CD14-positive monocyte (primary cell): ENCODE measurements at regions of chr1 and their contacts with region 1.

Region 1: DNA sequence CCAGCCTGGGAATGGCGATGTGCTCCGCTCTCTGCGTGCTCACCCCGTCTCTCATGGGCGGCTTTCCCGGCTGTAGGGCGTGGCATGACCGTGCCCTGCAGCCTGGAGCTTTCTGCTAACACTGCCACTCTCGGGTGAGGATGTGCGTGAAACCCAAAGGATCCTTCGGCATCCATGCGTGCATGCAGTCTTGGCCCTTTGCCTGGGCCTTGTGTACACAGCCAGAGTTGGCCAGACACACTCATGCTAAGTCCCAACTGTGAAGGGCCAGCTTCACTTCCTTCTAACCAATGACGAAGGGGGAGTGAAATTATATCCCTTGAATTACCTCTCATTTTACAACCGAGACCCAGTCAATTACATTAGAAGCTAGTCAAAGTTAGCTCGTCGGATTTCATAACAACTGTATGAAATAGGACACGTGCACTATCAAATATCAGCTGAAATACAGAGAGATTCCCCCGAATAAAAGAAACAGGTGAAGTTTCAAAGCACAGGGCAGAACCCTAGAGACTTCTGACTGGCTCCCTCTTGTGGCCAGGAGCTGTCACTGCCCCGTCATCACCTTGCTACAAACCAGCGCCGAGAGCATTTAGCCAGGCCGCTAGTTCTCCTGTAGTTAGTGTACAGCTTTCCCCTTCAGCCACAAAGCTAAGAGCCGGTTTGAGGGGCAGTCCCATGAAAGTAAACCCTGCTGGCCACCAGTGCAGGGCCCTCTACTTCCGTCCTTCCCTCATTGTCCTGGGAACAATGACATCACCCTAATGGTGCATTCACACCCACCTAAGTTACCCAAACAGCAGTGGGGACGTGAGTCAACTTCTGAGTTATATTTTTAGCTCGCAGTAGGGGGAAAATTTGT is 63.4 kb upstream of the COA6 start:
- DNase-seq: peak in 2 of 3 donors; percentile 56 to 61
- H3K4me3 ChIP-seq: peak overlapping the region in 1 of 3 experiments; percentile 46
- H3K4me3 Mint-ChIP-seq: peak overlapping the region; percentile 20 to 71
- H3K27ac ChIP-seq: no peak overlapping the region
- H3K27ac Mint-ChIP-seq: peak overlapping the region in 1 of 7 donors; percentile 46
- H3K4me1 ChIP-seq: peaks cover 9 to 18% of the 10 kb centered on the region in 2 donors
- H3K4me1 Mint-ChIP-seq: peaks cover 11% of the 10 kb centered on the region
- H3K27me3 ChIP-seq: no peaks in the 10 kb centered on the region
- H3K27me3 Mint-ChIP-seq: peaks cover 0 to 4% (median 0%) of the 10 kb centered on the region in 3 donors
- CTCF ChIP-seq: peak; percentile 97

Region 2: GRCh38 chr1:234114648-234115307 is 195.1 kb before region 1 on chr1:
- intact Hi-C with region 1: loop called in 1 of 2 experiments (anchors 10 kb)
- DNase-seq: peak; percentile 22 to 56 (median 53)
- H3K4me3 ChIP-seq: no peak overlapping the region
- H3K4me3 Mint-ChIP-seq: peak overlapping the region; percentile 44 to 73
- H3K27ac ChIP-seq: no peak overlapping the region
- H3K27ac Mint-ChIP-seq: no peak overlapping the region
- H3K4me1 ChIP-seq: no peaks in the 10 kb centered on the region
- H3K4me1 Mint-ChIP-seq: peaks cover 6% of the 10 kb centered on the region
- H3K27me3 ChIP-seq: peaks cover 0 to 2% of the 10 kb centered on the region in 2 donors
- H3K27me3 Mint-ChIP-seq: peaks cover 2 to 24% (median 7%) of the 10 kb centered on the region in 3 donors
- CTCF ChIP-seq: peak; percentile 82

Region 3: DNA sequence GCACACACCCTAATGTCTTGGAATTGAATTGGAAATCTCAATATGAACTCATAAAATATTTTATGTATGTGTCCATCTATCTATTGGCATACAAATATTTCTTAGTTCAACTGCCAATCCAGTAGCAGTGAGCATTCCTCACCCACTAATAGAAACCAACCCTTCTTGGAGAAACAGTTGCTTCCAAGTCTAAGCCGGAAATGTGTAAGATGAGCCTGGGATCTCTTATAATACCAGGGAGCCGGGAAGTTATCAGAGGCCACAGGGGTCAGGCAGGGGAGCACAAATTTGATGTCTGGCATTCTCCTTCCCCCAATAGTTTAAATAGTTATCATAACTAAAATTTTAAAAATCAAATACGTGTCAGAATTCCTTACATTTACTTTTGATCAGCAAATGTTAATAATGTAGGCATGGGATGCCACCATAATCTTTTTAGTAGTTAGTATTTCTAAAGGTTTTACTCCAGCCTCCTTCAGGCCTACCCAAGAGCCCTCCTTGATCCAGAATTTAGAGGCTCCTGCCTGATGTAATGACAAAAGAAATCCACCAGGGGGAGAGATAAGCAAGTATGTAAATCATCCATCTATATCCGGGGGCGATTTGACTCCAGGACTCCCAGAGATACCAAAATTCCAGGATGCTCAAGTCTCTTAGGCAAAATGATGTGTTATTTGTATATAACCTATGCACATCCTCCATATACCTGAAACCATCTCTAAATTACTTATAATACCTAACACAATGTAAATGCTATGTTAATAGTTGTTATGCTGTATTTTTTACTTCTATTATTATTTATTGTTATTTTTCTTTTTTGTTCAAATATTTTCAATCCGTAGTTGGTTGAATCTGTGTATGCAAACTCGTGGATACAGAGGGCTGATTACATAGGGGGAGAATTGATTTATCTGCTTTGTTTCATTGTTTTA is 155.2 kb before region 1 on chr1:
- intact Hi-C with region 1: loop called (anchors 10 kb)
- DNase-seq: peak; percentile 21 to 54 (median 48)
- H3K4me3 ChIP-seq: no peak overlapping the region
- H3K4me3 Mint-ChIP-seq: no peak overlapping the region
- H3K27ac ChIP-seq: no peak overlapping the region
- H3K27ac Mint-ChIP-seq: no peak overlapping the region
- H3K4me1 ChIP-seq: no peaks in the 10 kb centered on the region
- H3K4me1 Mint-ChIP-seq: no peaks in the 10 kb centered on the region
- H3K27me3 ChIP-seq: no peaks in the 10 kb centered on the region
- H3K27me3 Mint-ChIP-seq: peaks cover 0 to 1% (median 1%) of the 10 kb centered on the region in 3 donors
- CTCF ChIP-seq: peak; percentile 97

Region 4: DNA sequence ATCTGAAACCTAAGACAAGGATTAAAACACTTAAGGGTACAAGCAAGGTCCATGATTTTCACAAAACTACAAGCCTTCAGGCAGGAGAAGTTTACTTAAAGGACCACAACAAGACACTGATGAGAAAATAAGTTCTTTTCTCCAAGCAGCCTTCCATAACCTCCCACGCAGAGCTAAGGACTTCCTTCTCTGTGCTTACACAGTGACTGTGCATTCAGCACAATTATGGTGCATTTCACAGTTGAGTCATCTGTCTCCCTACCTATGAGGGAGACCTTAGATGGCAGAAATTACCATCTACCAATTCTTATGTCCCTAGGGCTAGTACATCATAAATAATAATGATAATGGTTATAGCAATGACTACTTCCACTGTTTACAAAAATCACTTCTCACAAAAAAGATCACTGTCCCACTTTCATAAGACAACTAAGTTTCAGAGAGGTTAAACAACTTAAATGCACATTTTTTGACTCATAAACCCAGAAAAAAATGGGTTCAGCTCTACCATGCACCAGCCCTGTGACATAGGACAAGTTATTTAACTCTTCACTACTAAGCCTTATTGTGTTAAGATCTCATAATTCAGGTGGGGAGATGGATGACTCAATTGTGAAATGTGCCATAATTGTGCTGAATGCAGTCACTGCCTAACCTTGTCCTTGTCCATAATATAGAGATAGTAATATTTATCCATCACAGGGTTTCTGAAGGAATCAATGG is 123.9 kb after region 1 on chr1:
- intact Hi-C with region 1: no loop called
- DNase-seq: no peak
- H3K4me3 ChIP-seq: no peak overlapping the region
- H3K4me3 Mint-ChIP-seq: no peak overlapping the region
- H3K27ac ChIP-seq: peak overlapping the region in 1 of 2 donors; percentile 24
- H3K27ac Mint-ChIP-seq: peak overlapping the region in 1 of 7 donors; percentile 2
- H3K4me1 ChIP-seq: peaks cover 5 to 10% of the 10 kb centered on the region in 2 donors
- H3K4me1 Mint-ChIP-seq: peaks cover 14% of the 10 kb centered on the region
- H3K27me3 ChIP-seq: no peaks in the 10 kb centered on the region
- H3K27me3 Mint-ChIP-seq: no peaks in the 10 kb centered on the region
- CTCF ChIP-seq: no peak